ENCODE measurements at regions of chr13 and their contacts with region 1.

Region 1: DNA sequence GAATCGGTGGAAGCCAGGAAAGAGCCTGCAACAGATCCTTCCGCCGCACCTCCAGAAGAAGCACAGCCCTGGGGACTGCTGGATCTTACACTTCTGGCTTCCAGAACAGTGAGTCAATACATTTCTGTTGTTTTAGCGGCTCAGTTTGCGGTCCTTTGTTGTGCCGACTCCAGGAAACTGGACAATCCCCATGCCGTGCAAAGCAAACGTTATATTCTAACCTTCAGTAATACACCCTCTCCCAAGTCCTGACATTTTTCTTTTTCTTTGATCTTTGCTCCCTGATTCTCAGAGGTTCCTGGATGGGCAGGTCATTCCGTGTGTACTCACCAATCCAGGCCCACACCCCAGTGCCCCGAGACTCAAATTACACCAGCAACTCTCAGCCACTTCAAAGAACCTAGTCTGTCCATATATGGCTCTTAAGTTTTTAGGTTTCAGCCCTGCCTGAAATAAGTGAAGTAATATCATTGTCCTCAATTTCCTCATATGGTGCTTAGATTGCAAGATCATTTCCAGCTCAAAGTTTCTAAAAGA is 387.1 kb upstream of the SGCG start:
- DNase-seq: peak; percentile 99
- ATAC-seq: peak; percentile 95
- H3K4me3 ChIP-seq: peak overlapping the region in 1 of 3 experiments; percentile 31; a peak in 2 of 6 replicates
- H3K27ac ChIP-seq: peak overlapping the region; percentile 62
- H3K4me1 ChIP-seq: peaks cover 62% of the 10 kb centered on the region
- H3K27me3 ChIP-seq: no peaks in the 10 kb centered on the region
- CTCF ChIP-seq: no peak
- EP300 ChIP-seq: peak; percentile 66 to 84; a peak in 3 of 4 replicates
- POLR2A ChIP-seq: no peak
- RAD21 ChIP-seq: no peak

Region 2: GRCh38 chr13:21297914-21298831 is 1495.5 kb before region 1 on chr13:
- CTCF ChIA-PET with region 1: no interaction called
- POLR2A ChIA-PET with region 1: no interaction called
- in situ Hi-C with region 1: no loop called
- intact Hi-C with region 1: loop called (anchors 10 kb)
- DNase-seq: peak; percentile 83
- ATAC-seq: peak; percentile 97
- H3K4me3 ChIP-seq: peak overlapping the region; percentile 76 to 85 (median 83)
- H3K27ac ChIP-seq: peak overlapping the region; percentile 41
- H3K4me1 ChIP-seq: peaks cover 12% of the 10 kb centered on the region
- H3K27me3 ChIP-seq: no peaks in the 10 kb centered on the region
- CTCF ChIP-seq: peak; percentile 97
- EP300 ChIP-seq: peak in 1 of 2 experiments; percentile 52; a peak in 2 of 4 replicates
- POLR2A ChIP-seq: no peak
- RAD21 ChIP-seq: peak; percentile 55

Region 3: DNA sequence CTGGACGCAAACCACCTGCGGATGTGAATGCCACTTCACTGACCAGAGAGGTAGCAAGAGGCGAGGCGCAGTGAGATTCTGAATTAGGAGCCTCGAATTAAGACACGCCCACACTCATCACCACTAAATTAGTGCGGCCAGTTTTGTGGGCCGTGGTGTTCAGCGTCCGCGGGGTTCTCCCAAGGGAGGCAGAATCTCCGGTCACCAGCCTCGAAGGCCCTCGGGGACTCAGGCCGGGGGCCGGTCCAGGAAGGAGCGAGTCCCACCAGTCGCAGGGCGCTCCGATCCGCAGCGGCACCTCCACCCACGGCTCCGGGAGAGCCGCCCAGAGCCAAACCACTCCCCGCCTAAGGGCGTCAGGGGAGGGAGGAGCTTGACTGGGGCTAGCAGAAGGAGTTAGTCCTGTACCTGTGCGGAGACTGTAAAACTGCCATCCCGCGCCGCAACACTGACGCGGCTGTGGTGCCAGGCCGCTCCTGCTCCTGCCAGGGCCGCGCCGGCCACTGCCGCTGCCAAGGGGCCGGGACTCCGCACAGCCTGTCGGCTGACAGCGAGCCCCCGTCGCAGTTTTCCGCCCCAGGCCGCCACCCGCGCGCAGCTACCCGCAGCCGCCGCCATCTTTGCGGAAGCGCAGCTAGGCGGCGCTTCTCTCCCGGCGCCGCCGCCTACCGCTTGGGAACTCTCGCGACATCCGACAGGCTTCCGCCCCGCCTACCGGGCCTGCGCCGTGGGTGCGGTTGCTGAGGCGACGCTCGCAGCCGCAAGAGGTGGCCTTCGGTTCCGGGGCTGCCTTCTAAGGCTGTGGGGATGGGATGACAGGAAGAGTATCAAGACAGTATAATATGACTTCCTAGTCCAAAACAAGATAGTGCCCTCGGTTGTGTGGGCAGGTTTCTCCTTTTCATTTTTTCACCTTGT is 1189.9 kb before region 1 on chr13 and contains the start of gene MICU2:
- CTCF ChIA-PET with region 1: no interaction called
- POLR2A ChIA-PET with region 1: interaction called, 4 read pairs
- in situ Hi-C with region 1: loop called (anchors 25 kb)
- intact Hi-C with region 1: no loop called
- DNase-seq: peak; percentile 89
- ATAC-seq: peak; percentile 99
- H3K4me3 ChIP-seq: peak within 1 kb of the TSS; percentile 80 to 82 (median 80)
- H3K27ac ChIP-seq: peak within 1 kb of the TSS; percentile 91
- H3K4me1 ChIP-seq: peaks cover 20% of the 10 kb centered on the region
- H3K27me3 ChIP-seq: peaks cover 0 to 3% of the 10 kb centered on the region in 2 experiments; a peak in 1 of 5 replicates
- CTCF ChIP-seq: peak; percentile 24
- EP300 ChIP-seq: no peak
- POLR2A ChIP-seq: peak; percentile 95 to 96
- RAD21 ChIP-seq: peak; percentile 57
- total RNA-seq, gene MICU2: 42.4 and 56.5 TPM in 2 replicates

Region 4: DNA sequence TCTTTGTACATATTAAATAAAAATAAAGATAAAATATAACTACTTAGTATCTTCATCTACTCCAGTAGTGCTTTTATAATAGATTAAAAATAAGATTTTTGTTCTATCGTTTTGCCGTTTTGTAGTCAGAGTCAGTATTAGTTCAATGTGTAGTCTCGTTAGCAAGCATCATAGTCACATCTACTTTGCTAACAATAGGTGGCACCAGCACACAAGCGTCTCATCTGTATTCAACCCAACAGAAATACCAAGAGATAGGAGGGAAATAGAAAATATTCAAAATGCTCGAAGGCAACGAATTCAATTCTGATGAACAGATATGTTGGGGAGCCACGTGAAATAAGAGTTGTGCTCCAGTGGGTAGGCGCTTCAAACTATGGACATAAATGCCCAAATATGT is 1168.3 kb before region 1 on chr13:
- CTCF ChIA-PET with region 1: interaction called, 3 read pairs
- POLR2A ChIA-PET with region 1: no interaction called
- in situ Hi-C with region 1: loop called (anchors 25 kb)
- intact Hi-C with region 1: loop called (anchors 5 kb)
- DNase-seq: peak; percentile 61
- ATAC-seq: peak; percentile 89
- H3K4me3 ChIP-seq: no peak overlapping the region
- H3K27ac ChIP-seq: no peak overlapping the region
- H3K4me1 ChIP-seq: peaks cover 15% of the 10 kb centered on the region
- H3K27me3 ChIP-seq: no peaks in the 10 kb centered on the region; a peak in 1 of 5 replicates
- CTCF ChIP-seq: peak; percentile 77
- EP300 ChIP-seq: no peak
- POLR2A ChIP-seq: no peak
- RAD21 ChIP-seq: peak; percentile 48; the same call in 1 of the 2 replicates

Region 5: GRCh38 chr13:21849323-21849722 is 944.3 kb before region 1 on chr13:
- CTCF ChIA-PET with region 1: no interaction called
- POLR2A ChIA-PET with region 1: no interaction called
- in situ Hi-C with region 1: no loop called
- intact Hi-C with region 1: loop called (anchors 10 kb)
- DNase-seq: peak; percentile 52
- ATAC-seq: peak; percentile 93
- H3K4me3 ChIP-seq: no peak overlapping the region
- H3K27ac ChIP-seq: no peak overlapping the region
- H3K4me1 ChIP-seq: peaks cover 5% of the 10 kb centered on the region; the same call in 1 of the 2 replicates
- H3K27me3 ChIP-seq: no peaks in the 10 kb centered on the region
- CTCF ChIP-seq: peak; percentile 66
- EP300 ChIP-seq: no peak
- POLR2A ChIP-seq: no peak
- RAD21 ChIP-seq: no peak

Region 6: DNA sequence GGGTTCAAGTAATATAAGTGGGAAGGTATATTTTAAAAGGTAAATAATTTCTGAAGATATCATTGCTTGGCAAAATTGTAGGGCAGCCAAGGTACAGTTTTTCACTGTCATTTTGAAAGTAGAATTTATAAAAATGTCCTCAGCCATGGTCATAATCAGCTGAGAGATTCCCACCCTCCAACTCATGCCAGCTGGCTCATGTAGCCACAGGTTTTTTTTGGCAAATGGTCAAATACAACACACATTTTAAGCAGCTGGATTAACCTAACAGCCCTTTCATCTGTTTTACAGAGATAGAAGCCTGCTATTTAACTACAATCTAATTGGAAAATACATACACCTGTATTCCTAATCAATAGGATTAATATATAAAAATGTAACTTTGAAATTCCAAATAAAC is 232.1 kb before region 1 on chr13:
- CTCF ChIA-PET with region 1: no interaction called
- POLR2A ChIA-PET with region 1: no interaction called
- in situ Hi-C with region 1: no loop called
- intact Hi-C with region 1: no loop called
- DNase-seq: no peak
- ATAC-seq: no peak
- H3K4me3 ChIP-seq: no peak overlapping the region
- H3K27ac ChIP-seq: no peak overlapping the region
- H3K4me1 ChIP-seq: no peaks in the 10 kb centered on the region
- H3K27me3 ChIP-seq: no peaks in the 10 kb centered on the region
- CTCF ChIP-seq: no peak
- EP300 ChIP-seq: no peak
- POLR2A ChIP-seq: no peak
- RAD21 ChIP-seq: no peak

Measured in HepG2 (cell line).